ENCODE measurements at regions of chr1 and their contacts with region 1.

Region 1: DNA sequence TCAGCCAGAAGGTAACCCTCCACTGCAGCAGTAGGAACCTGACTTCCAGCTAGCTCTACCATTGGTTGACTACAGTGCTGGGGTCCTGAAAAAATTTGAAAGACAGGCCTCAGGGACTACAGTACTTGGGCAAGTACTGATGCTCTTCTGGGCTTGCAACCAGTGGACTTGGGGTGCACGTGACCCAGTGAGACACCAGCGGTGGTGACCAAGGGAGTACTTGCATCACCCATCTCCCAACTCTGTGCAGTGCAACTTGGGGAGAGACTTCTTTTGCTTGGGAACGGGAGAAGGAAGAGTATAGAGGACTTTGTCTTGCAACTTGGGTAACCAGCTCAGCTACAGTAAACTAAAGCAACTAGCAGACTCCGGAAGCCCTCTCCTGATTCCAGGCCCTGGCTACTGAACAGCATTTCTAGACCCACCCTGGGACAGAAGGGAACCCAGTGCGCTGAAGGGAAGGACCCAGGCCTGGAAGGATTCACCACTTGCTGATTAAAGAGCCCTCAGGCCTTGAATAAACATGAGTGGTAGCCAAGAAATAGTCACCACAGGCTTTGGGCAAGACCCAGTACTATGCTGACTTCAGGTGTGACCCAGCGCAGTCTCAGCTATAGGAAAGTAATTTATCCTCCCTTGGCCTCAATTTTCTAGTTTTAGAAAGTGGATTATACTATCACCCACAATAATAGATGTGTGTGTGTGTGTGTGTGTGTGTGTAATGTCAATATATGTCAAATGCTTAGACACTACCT is 45.6 kb downstream of the TNNI3K start:
- DNase-seq: no peak
- H3K4me3 ChIP-seq: no peak overlapping the region
- H3K27ac ChIP-seq: no peak overlapping the region
- H3K4me1 ChIP-seq: no peaks in the 10 kb centered on the region
- H3K27me3 ChIP-seq: no peaks in the 10 kb centered on the region
- CTCF ChIP-seq: no peak
- POLR2A ChIP-seq: no peak

Region 2: DNA sequence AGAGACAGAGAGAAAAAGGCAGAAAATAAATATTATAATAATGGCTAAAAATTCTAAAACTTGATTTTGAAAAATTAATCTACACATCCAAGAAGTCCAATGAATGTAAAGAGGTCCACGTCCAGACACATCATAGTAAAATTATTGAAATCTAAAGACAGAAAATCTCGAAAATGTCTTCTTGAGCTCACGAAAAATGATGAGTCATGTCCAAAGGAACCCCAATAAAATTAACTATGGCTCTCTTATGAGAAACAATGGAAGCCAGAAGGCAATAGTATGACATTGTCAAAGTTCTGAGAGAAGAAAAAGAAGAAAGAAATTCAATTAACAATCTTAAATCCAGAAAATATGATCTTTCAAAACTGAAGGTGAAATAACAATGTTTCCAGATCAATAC is 167.5 kb before region 1 on chr1:
- intact Hi-C with region 1: loop called (anchors 5 kb)
- DNase-seq: no peak
- H3K4me3 ChIP-seq: no peak overlapping the region
- H3K27ac ChIP-seq: no peak overlapping the region
- H3K4me1 ChIP-seq: no peaks in the 10 kb centered on the region
- H3K27me3 ChIP-seq: no peaks in the 10 kb centered on the region
- CTCF ChIP-seq: no peak
- POLR2A ChIP-seq: no peak

Region 3: DNA sequence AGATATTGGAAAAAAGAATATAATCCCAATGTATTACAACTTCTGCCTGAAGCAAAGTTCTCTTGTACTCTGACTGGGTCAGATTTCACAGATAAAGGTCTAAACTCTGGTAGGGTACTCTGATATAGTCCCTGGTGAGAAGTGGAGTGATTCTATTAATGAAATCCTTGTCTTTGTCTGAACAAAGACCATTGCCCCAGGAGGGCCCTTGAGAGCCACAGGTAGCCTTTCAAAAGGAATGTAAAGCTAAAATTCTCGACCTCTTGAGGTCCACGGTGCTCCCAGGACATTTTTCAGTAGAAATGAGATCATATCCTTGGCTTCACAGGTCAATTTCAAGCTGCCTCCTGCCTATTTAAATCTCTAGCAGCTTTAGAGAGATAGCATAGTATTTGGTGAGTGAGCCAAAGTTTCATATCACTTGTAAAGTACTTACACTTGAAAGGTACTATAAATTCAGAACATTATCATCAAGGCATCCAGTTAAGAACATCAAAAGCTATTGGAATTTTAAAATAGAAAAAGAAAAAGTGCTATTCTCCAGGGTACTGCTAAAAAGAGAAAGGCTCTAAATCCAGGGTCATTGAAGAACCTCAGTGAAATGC is 35.5 kb before region 1 on chr1:
- intact Hi-C with region 1: loop called (anchors 5 kb)
- DNase-seq: no peak
- H3K4me3 ChIP-seq: no peak overlapping the region
- H3K27ac ChIP-seq: no peak overlapping the region
- H3K4me1 ChIP-seq: no peaks in the 10 kb centered on the region
- H3K27me3 ChIP-seq: no peaks in the 10 kb centered on the region
- CTCF ChIP-seq: no peak
- POLR2A ChIP-seq: no peak